PC-9 (cell line): ENCODE measurements at regions of chr2 and their contacts with region 1.

Region 1: DNA sequence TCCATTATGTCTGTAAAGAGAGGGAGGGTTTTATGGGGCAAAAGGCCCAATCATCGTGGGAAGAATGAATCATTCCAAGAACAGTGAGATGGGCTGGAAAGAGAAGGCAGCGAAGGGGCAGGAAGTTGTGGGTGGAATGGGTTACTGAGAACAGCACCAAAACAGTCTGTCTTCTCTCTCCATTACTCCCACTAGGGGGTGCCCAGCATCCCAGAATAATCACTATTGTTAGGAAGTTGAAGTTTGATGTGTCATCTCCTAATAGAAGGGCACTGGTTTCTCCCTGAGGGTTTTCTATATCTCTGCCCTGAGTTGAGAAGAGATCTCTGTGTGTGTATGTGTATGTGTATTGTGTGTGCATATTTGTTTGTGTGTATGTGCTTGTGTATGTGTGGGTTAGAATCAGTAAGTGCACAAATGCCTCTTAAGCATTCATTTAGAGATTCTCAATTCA is 76.6 kb upstream of the MAP4K3 start:
- DNase-seq: peak; percentile 40 to 65
- H3K4me3 ChIP-seq: no peak overlapping the region
- H3K27ac ChIP-seq: no peak overlapping the region
- H3K4me1 ChIP-seq: peaks cover 14% of the 10 kb centered on the region; the same call in 1 of the 2 replicates
- H3K27me3 ChIP-seq: no peaks in the 10 kb centered on the region
- CTCF ChIP-seq: peak; percentile 81

Region 2: DNA sequence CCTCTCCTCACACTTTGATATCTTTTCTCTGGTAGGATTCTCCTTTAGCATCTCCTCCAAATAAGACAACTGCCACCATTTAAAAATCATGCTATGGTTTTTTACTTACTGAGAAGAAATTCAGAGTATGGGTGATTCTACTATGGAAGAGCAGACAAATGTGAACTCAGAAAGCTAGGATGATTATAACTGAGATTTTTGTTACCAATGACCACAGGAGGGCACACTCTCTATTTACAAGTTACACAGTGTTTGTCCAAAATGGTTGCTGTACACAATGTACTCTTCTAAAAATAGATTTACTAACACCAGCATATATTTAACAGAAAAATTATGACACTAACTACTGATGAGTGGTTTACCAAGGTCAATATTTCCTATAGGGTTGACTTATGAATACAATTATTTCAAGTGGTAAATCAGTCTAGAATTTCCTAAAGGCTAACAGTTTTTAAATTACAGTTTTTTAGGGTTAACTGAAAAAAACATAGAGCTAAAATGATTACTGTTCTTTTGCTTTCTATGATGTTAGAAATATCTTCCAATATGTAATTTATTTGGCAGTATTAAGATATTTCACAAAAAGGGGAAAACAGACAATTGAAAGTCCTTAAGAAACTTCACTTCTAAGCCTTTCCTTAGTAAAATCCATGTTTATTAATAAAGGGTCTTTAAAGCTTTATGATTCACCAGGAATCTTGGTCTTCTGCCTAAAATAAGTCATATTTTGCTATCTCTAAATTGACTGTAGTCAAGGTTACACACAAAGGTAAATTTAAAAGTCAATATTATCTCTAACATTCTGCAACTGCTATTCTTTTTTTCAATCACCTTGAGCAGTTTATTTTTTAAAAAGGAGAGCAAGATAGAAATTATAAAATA is 133.8 kb before region 1 on chr2:
- CTCF ChIA-PET with region 1: interaction called, 5 read pairs
- POLR2A ChIA-PET with region 1: no interaction called
- intact Hi-C with region 1: loop called (anchors 1 kb)
- DNase-seq: peak in 1 of 2 experiments; percentile 50
- H3K4me3 ChIP-seq: no peak overlapping the region
- H3K27ac ChIP-seq: no peak overlapping the region; the same call in 1 of the 2 replicates
- H3K4me1 ChIP-seq: no peaks in the 10 kb centered on the region
- H3K27me3 ChIP-seq: no peaks in the 10 kb centered on the region
- CTCF ChIP-seq: peak; percentile 84

Region 3: DNA sequence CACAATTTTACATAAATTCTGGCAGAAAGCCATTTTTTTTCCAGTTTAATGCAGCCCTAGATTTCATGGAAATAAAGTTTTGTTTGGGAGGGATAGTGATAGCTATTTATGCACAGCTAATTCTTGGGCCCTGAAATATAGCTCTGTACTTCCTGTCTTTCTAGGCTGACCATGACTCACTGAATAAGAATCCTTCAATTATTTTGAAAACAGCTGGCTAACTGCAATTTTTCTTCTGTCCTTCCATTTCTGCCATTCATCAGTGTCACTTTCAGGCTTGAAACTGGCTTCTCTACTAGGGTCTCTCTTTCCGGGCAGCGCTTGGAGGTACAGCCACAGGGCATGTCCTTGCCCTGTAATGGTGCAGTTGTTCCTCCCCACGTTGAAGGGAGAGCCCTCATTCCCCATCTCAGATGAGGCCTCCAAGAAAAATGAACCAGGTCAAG is 54.9 kb after region 1 on chr2:
- CTCF ChIA-PET with region 1: no interaction called
- POLR2A ChIA-PET with region 1: no interaction called
- intact Hi-C with region 1: loop called (anchors 1 kb)
- DNase-seq: peak; percentile 57 to 89
- H3K4me3 ChIP-seq: peak overlapping the region; percentile 40; the same call in 1 of the 2 replicates
- H3K27ac ChIP-seq: peak overlapping the region; percentile 83
- H3K4me1 ChIP-seq: peaks cover 49% of the 10 kb centered on the region
- H3K27me3 ChIP-seq: no peaks in the 10 kb centered on the region
- CTCF ChIP-seq: no peak

Region 4: DNA sequence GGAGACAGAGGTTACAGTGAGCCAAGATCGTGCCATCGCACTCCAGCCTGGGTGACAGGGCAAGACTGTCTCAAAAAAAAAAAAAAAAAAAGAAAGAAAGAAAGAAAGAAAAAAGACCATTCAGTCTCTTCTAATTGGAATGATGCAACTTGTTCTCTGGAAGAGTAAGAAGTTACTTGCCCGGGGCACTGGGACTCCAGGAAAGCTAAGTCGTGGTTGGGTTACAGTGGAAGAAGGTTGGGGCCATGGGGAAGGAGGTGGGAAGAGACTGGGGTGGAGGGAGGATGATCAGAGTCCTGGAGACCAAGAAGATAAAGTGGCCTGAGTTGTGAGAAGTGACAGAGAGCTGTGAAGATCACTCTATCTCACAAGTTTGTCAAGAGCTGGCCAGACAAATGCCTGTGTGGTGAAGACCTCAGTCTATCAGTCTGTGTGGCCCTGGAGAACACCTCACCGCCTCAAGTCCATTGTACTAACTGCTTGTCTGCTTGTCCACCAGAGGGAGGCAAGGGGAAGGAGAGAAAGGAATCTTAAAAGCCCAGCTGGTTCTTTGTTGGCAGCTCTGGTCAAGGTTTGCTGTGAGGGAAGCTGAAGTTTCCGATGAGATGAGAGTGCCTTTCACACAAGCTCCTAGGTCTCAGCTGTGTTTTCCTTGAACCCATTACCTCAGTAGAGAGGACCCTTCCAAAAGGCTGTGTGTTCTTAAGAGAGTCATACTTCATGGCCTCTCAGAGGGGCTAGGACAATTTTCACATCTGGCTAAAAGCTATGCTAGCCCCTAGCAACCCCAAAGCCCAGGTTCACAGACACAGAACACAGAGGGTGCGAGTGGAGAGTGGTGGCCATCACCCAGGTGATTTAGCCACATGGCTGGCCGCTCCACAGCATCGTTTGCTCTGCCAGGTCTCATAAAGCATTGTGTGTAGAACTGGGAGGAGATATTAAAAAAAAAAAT is 80.0 kb after region 1 on chr2:
- CTCF ChIA-PET with region 1: no interaction called
- POLR2A ChIA-PET with region 1: no interaction called
- intact Hi-C with region 1: loop called (anchors 2 kb)
- DNase-seq: peak in 1 of 2 experiments; percentile 16
- H3K4me3 ChIP-seq: no peak overlapping the region
- H3K27ac ChIP-seq: no peak overlapping the region
- H3K4me1 ChIP-seq: no peaks in the 10 kb centered on the region
- H3K27me3 ChIP-seq: no peaks in the 10 kb centered on the region
- CTCF ChIP-seq: peak; percentile 63

Region 5: DNA sequence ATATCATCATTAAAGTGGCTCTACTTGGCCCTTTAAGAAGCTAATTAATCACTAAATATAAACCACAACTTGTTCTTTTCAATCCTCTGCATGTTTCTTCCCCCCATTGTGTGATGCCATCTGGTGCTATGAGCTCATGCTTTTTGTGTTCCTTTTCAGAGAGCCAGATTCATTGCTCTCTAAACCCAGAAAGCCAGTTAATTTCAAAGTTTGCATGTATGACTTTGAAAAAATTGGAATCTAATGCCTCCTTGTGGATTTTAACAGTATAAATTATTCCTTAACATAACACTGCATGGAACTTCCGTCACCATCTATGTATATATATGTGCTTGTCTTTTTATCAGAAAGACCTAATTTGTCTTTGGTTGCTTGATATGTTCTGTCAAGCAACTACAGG is 183.2 kb after region 1 on chr2:
- CTCF ChIA-PET with region 1: no interaction called
- POLR2A ChIA-PET with region 1: no interaction called
- intact Hi-C with region 1: loop called (anchors 2 kb)
- DNase-seq: no peak
- H3K4me3 ChIP-seq: no peak overlapping the region
- H3K27ac ChIP-seq: no peak overlapping the region
- H3K4me1 ChIP-seq: no peaks in the 10 kb centered on the region
- H3K27me3 ChIP-seq: no peaks in the 10 kb centered on the region
- CTCF ChIP-seq: peak; percentile 62

Region 6: GRCh38 chr2:39728941-39729351 is 215.3 kb after region 1 on chr2:
- CTCF ChIA-PET with region 1: no interaction called
- POLR2A ChIA-PET with region 1: no interaction called
- intact Hi-C with region 1: loop called (anchors 5 kb)
- DNase-seq: peak; percentile 31 to 49
- H3K4me3 ChIP-seq: no peak overlapping the region
- H3K27ac ChIP-seq: no peak overlapping the region
- H3K4me1 ChIP-seq: no peaks in the 10 kb centered on the region
- H3K27me3 ChIP-seq: no peaks in the 10 kb centered on the region
- CTCF ChIP-seq: peak; percentile 94

Region 7: DNA sequence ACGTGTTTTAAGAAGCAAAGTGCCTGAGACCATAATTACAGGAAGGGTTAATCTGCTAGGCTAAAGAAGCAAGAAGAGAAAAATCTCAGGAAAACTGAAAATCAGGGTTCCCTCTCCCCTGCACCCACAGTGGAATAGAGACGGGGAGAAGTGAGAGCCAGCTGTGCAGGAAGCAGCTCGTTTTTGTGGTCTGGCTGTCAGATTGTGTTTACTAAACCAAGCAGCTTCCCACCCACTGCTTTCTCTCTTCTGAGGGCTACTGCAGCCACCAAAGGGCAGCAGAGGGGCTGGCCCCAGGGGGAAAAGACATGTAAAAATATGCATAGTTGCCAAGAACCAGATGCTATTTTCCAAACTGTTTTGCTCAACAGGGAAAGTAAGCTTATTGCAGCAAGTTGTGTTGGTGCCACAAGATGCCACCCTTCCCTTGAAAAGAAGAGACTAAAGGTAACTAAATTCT is 338.0 kb after region 1 on chr2:
- CTCF ChIA-PET with region 1: no interaction called
- POLR2A ChIA-PET with region 1: no interaction called
- intact Hi-C with region 1: no loop called
- DNase-seq: no peak
- H3K4me3 ChIP-seq: no peak overlapping the region
- H3K27ac ChIP-seq: no peak overlapping the region
- H3K4me1 ChIP-seq: peaks cover 26% of the 10 kb centered on the region
- H3K27me3 ChIP-seq: no peaks in the 10 kb centered on the region
- CTCF ChIP-seq: no peak